ENCODE measurements at regions of chr13 and their contacts with region 1.

Region 1: GRCh38 chr13:99147736-99148135 is 52.9 kb upstream of the UBAC2 start:
- DNase-seq: no peak
- ATAC-seq: no peak
- H3K4me3 ChIP-seq: no peak overlapping the region
- H3K27ac ChIP-seq: no peak overlapping the region
- H3K4me1 ChIP-seq: no peaks in the 10 kb centered on the region
- H3K27me3 ChIP-seq: peaks cover 9% of the 10 kb centered on the region; the same call in 1 of the 2 replicates
- CTCF ChIP-seq: no peak
- POLR2A ChIP-seq: no peak
- RAD21 ChIP-seq: no peak

Region 2: DNA sequence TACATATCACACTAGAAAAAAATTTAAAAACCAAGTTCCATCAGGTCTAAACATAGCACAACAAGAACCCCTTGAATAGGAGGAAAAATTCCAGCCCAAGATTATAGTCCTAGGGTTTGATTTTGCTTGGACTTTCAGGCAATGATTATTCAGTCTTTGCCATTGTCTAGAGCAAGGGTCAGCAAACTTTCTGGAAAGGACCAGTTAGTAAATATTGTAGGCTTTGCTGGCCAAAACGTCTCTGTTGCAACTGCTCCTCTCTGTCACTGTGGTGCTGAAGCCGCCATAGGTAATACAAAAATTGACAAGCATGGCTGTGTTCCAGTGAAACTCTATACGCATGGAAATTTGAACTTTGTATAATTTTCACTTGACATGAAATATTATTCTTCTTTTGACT is 42.6 kb before region 1 on chr13:
- CTCF ChIA-PET with region 1: no interaction called
- POLR2A ChIA-PET with region 1: no interaction called
- dilution Hi-C with region 1: no loop called
- in situ Hi-C with region 1: no loop called
- intact Hi-C with region 1: loop called (anchors 5 kb)
- DNase-seq: no peak
- ATAC-seq: no peak
- H3K4me3 ChIP-seq: no peak overlapping the region
- H3K27ac ChIP-seq: no peak overlapping the region
- H3K4me1 ChIP-seq: no peaks in the 10 kb centered on the region
- H3K27me3 ChIP-seq: peaks cover 4% of the 10 kb centered on the region; the same call in 1 of the 2 replicates
- CTCF ChIP-seq: no peak
- POLR2A ChIP-seq: no peak
- RAD21 ChIP-seq: no peak

Region 3: GRCh38 chr13:99566125-99567083 is 418.7 kb after region 1 on chr13:
- CTCF ChIA-PET with region 1: no interaction called
- POLR2A ChIA-PET with region 1: no interaction called
- dilution Hi-C with region 1: no loop called
- in situ Hi-C with region 1: no loop called
- intact Hi-C with region 1: no loop called
- DNase-seq: no peak
- ATAC-seq: no peak
- H3K4me3 ChIP-seq: no peak overlapping the region
- H3K27ac ChIP-seq: no peak overlapping the region
- H3K4me1 ChIP-seq: no peaks in the 10 kb centered on the region
- H3K27me3 ChIP-seq: no peaks in the 10 kb centered on the region
- CTCF ChIP-seq: no peak
- POLR2A ChIP-seq: no peak
- RAD21 ChIP-seq: no peak

Measured in IMR-90 (cell line).